BJ (cell line): ENCODE measurements at regions of chr2 and their contacts with region 1.

Region 1: GRCh38 chr2:157336137-157337010 is 10.8 kb upstream of the ERMN start:
- DNase-seq: no peak
- H3K4me3 ChIP-seq: no peak overlapping the region
- H3K27me3 ChIP-seq: peaks cover 1% of the 10 kb centered on the region; the same call in 1 of the 2 replicates
- CTCF ChIP-seq: peak; percentile 71

Region 2: GRCh38 chr2:157311706-157312105 is 24.7 kb before region 1 on chr2:
- CTCF ChIA-PET with region 1: interaction called, 308 read pairs
- POLR2A ChIA-PET with region 1: no interaction called
- DNase-seq: no peak
- H3K4me3 ChIP-seq: no peak overlapping the region
- H3K27me3 ChIP-seq: no peaks in the 10 kb centered on the region
- CTCF ChIP-seq: no peak

Region 3: GRCh38 chr2:157321466-157321865 is 14.9 kb before region 1 on chr2:
- CTCF ChIA-PET with region 1: interaction called, 93 read pairs
- POLR2A ChIA-PET with region 1: no interaction called
- DNase-seq: no peak
- H3K4me3 ChIP-seq: no peak overlapping the region
- H3K27me3 ChIP-seq: peaks cover 2% of the 10 kb centered on the region
- CTCF ChIP-seq: no peak

Region 4: DNA sequence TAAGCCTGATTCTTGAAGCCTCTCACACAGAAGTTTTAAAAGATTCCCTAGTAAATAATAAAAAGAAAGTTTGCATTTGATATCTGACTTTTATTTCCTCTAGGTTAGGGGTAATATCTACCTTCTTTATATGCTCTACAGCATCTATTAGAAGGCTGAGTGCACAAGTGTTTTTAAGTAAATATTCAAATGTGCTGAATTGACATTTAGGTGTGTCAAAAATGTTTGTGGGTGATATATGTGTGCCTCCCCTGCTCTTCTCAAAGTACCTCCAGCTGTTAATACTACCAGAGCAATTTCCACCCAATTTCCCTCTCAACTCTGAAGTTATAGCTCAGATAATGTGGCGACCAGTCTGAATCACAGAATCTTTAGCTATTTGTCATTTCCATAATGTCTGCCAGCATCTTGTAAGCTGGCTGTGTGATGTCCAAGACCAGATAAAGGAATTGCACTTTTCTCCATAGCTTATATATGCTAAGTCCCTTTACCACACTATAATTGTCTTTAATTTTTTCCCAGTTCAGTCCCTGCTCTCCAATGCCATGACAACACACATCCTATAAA is 13.7 kb after region 1 on chr2:
- CTCF ChIA-PET with region 1: interaction called, 41 read pairs
- POLR2A ChIA-PET with region 1: no interaction called
- DNase-seq: no peak
- H3K4me3 ChIP-seq: no peak overlapping the region
- H3K27me3 ChIP-seq: no peaks in the 10 kb centered on the region
- CTCF ChIP-seq: no peak

Region 5: DNA sequence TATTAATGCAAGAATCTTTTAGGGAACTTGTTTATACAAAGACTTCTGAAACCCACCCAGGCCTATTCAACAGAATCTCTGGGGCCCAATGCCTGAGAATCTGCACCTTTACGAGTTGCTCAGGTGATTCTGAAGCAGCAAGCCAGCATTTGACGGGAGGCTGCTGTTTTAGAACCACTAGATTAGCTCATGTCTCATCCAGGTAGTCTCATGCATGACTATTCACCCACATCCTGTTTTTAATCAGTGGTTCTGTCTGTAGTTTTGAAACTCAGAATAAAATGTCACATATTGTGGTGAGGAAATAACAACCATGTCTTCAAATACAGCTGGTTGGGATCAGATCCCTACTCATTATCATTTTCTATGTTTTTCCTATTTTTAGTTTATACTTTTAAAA is 68.0 kb after region 1 on chr2:
- CTCF ChIA-PET with region 1: no interaction called
- POLR2A ChIA-PET with region 1: no interaction called
- DNase-seq: no peak
- H3K4me3 ChIP-seq: no peak overlapping the region
- H3K27me3 ChIP-seq: no peaks in the 10 kb centered on the region
- CTCF ChIP-seq: no peak